Activated T-helper 1 cell treated with anti-CD3 and anti-CD28 coated beads, Interleukin-12 subunit alpha, Interleukin-12 subunit beta, Interleukin-2, Interleukin-4 antibody, amounts not matched to agents 30 ng/mL and 10 ng/mL and 1 ng/mL, durations not matched to agents 14 hours and 24 hours and 36 hours (primary cell): ENCODE measurements at regions of chr10 and their contacts with region 1.

Region 1: GRCh38 chr10:3852147-3852904 is 67.3 kb upstream of the KLF6 start:
- DNase-seq: peak; percentile 58
- H3K4me3 Mint-ChIP-seq: peak overlapping the region; percentile 52
- H3K27ac Mint-ChIP-seq: peak overlapping the region; percentile 92
- H3K4me1 Mint-ChIP-seq: peaks cover 37% of the 10 kb centered on the region
- H3K27me3 Mint-ChIP-seq: no peaks in the 10 kb centered on the region

Region 2: GRCh38 chr10:3805791-3806461 is 46.4 kb before region 1 on chr10:
- intact Hi-C with region 1: loop called (anchors 1 kb)
- DNase-seq: no peak
- H3K4me3 Mint-ChIP-seq: peak overlapping the region; percentile 70
- H3K27ac Mint-ChIP-seq: peak overlapping the region; percentile 99
- H3K4me1 Mint-ChIP-seq: peaks cover 76% of the 10 kb centered on the region
- H3K27me3 Mint-ChIP-seq: no peaks in the 10 kb centered on the region

Region 3: DNA sequence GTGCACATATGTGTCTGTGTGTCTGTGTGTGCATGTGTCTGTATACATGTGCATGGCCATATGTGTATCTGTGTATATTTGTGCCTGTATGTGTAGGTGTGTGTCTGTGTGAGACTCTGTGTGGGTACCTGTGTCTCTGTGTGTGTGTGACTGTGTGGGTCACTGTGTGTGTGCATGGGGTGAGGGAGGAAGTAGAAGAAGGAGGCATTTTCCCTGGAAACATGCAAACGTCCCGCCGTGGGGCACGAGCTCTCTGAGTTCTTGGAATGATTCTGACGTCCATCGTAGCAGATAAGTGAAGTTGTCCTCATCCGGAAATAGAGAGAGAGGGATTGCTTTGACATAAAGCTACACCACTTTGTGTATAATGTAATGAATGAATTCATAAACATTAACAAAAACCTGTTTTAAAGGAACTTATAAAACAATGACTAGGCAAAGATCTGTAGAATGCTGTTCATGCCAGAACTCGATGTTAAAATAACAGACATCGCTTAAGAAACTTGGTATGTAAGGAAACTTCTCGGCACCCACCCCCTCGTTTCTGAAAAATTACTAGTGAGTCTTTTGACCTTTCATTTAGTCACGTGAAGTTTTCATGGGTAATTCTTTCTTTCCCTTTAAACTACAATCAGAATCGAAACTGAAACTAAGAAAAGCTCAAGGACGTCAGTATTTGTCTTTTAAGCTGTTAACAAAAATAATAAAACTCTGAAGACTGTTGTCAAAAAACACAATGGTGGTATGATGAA is 23.7 kb before region 1 on chr10:
- intact Hi-C with region 1: loop called (anchors 1 kb)
- DNase-seq: no peak
- H3K4me3 Mint-ChIP-seq: peak overlapping the region; percentile 58
- H3K27ac Mint-ChIP-seq: peak overlapping the region; percentile 93
- H3K4me1 Mint-ChIP-seq: peaks cover 57% of the 10 kb centered on the region
- H3K27me3 Mint-ChIP-seq: no peaks in the 10 kb centered on the region

Region 4: DNA sequence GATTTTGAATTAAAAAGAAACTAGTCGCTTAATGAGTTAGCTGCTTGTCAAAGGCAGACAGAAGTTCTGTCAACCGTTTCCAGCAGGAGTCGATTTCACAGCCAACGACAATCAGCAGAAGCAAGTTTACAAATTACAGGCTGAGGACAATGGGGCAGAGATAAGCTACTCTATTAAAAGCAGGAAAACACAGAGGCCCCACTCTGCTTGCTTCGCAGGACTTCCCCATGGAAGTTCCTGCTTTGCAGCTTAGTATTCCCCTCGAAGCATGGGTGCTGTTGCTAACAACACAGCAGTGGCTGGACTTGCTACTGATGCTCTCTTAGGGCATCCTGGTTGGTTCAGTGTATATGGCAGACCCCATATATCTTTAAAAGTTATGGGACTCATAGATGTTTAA is 16.6 kb before region 1 on chr10:
- intact Hi-C with region 1: loop called (anchors 1 kb)
- DNase-seq: no peak
- H3K4me3 Mint-ChIP-seq: no peak overlapping the region
- H3K27ac Mint-ChIP-seq: peak overlapping the region; percentile 83
- H3K4me1 Mint-ChIP-seq: peaks cover 36% of the 10 kb centered on the region
- H3K27me3 Mint-ChIP-seq: no peaks in the 10 kb centered on the region